ENCODE measurements at regions of chr9 and their contacts with region 1.

Region 1: GRCh38 chr9:2857564-2858198 is 13.8 kb upstream of the PUM3 start:
- DNase-seq: peak; percentile 81

Region 2: DNA sequence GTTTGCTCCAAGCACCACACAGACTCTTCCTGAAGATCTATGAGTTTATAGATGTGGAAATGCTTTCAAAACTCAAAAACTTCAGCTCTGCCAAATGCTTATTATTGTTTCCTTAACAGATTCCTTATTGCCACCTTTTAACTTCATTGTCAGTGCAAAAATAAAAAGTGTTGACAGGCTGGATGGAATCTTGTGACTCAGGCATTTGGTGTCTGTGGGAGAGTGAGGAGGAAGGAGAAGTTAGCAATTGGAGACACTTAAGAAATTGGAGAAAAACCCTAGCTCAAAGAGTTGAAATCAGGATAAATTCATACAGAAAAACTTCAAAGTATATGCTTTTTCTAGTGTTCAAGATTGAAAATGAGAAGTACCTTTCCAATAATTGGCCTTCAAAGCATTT is 126.8 kb after region 1 on chr9:
- in situ Hi-C with region 1: no loop called
- DNase-seq: no peak

Region 3: DNA sequence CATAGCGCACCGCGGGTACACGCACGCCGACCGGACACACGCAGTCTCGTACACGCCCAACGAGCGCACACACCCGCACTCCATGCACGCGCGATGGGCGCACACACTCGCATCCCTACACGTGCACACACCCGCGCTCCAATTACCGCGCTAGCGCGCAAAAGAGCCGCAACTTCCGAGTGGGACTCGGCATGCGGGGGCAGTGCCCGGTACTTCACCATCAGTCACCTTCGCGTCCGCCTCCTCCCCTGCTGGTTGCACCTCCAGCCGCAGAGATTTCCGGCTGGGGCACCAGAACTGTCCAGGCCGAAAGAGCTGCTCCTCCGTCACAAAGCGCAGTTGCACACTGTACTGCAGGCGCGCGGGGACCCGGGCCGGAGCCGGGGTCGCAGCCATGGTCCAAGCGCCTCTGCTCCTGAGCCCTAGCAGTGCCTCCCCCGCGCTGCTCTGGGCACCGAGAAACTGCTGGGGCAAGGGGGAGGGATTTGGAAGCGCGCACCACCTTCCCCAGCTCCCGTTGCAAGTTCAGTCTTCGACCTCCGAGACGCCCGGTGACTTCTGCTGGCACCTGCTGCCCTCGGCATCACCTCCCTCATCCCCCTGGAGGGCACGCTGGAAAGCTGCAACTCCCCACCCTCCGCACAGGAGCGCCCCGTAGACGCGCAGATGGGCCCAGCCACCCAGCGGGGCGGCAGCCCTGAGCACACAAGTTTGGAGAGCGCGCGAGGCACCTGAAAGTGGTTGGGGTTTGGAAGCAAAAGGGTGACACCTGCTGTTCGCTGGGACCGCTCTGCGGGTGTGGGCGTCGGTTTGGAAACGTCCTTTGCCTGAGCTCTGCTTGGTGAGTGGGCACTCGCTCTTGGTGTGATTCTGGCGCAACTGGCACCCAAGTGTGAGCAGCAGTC is 323.6 kb after region 1 on chr9:
- in situ Hi-C with region 1: loop called (anchors 25 kb)
- DNase-seq: peak; percentile 55

Measured in KBM-7 (cell line).